SK-N-SH (cell line): ENCODE measurements at regions of chr2 and their contacts with region 1.

Region 1: GRCh38 chr2:216404010-216404618 is 8.2 kb upstream of the SMARCAL1 start:
- DNase-seq: peak; percentile 54
- H3K4me3 ChIP-seq: no peak overlapping the region
- H3K27ac ChIP-seq: no peak overlapping the region
- H3K4me1 ChIP-seq: no peaks in the 10 kb centered on the region; a peak in 1 of 4 replicates
- H3K27me3 ChIP-seq: no peaks in the 10 kb centered on the region
- CTCF ChIP-seq: peak; percentile 90
- EP300 ChIP-seq: no peak
- RAD21 ChIP-seq: peak; percentile 74

Region 2: GRCh38 chr2:216202626-216203250 is 201.4 kb before region 1 on chr2:
- CTCF ChIA-PET with region 1: interaction called, 15 read pairs
- POLR2A ChIA-PET with region 1: no interaction called
- DNase-seq: no peak
- H3K4me3 ChIP-seq: no peak overlapping the region
- H3K27ac ChIP-seq: peak overlapping the region in 1 of 2 experiments; percentile 98; a peak in 2 of 4 replicates
- H3K4me1 ChIP-seq: peaks cover 0 to 38% of the 10 kb centered on the region in 2 experiments; a peak in 2 of 4 replicates
- H3K27me3 ChIP-seq: no peaks in the 10 kb centered on the region
- CTCF ChIP-seq: no peak
- EP300 ChIP-seq: no peak
- RAD21 ChIP-seq: no peak

Region 3: GRCh38 chr2:216366777-216367471 is 37.2 kb before region 1 on chr2:
- CTCF ChIA-PET with region 1: interaction called, 13 read pairs
- POLR2A ChIA-PET with region 1: no interaction called
- DNase-seq: no peak
- H3K4me3 ChIP-seq: peak overlapping the region in 1 of 2 experiments; percentile 65; a peak in 2 of 4 replicates
- H3K27ac ChIP-seq: peak overlapping the region in 1 of 2 experiments; percentile 54; a peak in 2 of 4 replicates
- H3K4me1 ChIP-seq: peaks cover 31 to 38% of the 10 kb centered on the region in 2 experiments
- H3K27me3 ChIP-seq: no peaks in the 10 kb centered on the region
- CTCF ChIP-seq: no peak
- EP300 ChIP-seq: no peak
- RAD21 ChIP-seq: no peak

Region 4: DNA sequence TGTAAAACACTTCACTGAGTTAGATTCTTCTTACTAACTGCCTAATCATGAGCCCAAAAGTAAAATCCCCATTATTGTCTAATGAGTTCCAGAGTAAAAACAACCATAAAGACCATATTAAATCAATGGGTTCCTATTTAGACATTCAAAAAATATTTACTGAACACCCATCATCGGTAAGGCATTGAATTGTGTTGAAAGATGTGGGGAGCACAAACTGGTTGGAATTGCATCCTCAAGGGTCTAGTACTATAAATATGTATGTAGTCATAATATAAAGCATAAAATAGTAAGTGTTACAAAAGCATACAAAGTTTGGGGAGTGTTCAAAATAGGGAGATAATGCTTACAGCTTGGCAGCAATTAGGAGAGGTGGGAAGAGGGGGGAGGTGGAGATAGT is 28.8 kb before region 1 on chr2:
- CTCF ChIA-PET with region 1: interaction called, 10 read pairs
- POLR2A ChIA-PET with region 1: no interaction called
- DNase-seq: no peak
- H3K4me3 ChIP-seq: no peak overlapping the region
- H3K27ac ChIP-seq: no peak overlapping the region
- H3K4me1 ChIP-seq: peaks cover 5 to 20% of the 10 kb centered on the region in 2 experiments; a peak in 2 of 4 replicates
- H3K27me3 ChIP-seq: no peaks in the 10 kb centered on the region
- CTCF ChIP-seq: no peak
- EP300 ChIP-seq: no peak
- RAD21 ChIP-seq: no peak

Region 5: GRCh38 chr2:216426938-216427337 is 22.8 kb after region 1 on chr2:
- CTCF ChIA-PET with region 1: no interaction called
- POLR2A ChIA-PET with region 1: no interaction called
- DNase-seq: no peak
- H3K4me3 ChIP-seq: no peak overlapping the region
- H3K27ac ChIP-seq: peak overlapping the region; percentile 83 to 87
- H3K4me1 ChIP-seq: peaks cover 0 to 11% of the 10 kb centered on the region in 2 experiments; a peak in 2 of 4 replicates
- H3K27me3 ChIP-seq: no peaks in the 10 kb centered on the region
- CTCF ChIP-seq: no peak
- EP300 ChIP-seq: peak in 1 of 2 experiments; percentile 65; a peak in 1 of 4 replicates
- RAD21 ChIP-seq: no peak